ENCODE measurements at regions of chr2 and their contacts with region 1.

Region 1: DNA sequence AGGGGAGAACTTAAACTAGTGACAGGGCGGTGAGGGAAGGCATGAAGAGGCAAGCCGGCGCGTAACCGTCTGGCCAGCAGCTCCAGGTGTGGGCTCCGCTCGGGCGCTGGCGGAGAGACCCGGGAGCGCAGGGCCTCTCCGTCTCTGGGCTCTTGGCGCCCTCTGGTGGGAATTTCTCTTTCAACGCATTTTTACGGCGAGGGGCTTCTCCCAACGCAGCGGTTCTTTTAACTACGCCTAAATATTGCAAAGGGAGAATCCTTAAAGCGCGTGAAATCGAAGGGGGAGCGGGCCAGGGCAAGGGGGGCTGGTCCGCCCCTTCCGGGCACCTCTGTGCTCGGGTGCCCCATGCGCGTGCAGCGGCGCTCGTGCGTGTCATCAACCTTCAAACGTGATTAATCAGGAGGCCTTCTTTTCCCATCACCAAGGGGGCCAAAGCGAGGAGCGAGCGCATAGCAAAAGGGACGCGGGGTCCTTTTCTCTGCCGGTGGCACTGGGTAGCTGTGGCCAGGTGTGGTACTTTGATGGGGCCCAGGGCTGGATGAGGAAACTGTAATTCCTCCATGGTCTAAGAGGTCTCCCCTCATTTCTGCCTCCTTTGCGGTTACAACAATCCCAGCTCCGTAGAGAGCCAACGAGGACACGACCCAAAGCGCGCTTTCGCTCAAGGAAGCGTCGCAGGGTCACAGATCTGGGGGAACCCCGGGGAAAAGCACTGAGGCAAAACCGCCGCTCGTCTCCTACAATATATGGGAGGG is 762 bp upstream of the GAD1 start:
- DNase-seq: peak; percentile 81
- H3K4me3 ChIP-seq: peak overlapping the region; percentile 16 to 72 (median 44)
- H3K27ac ChIP-seq: no peak overlapping the region
- H3K4me1 ChIP-seq: peaks cover 45 to 78% (median 62%) of the 10 kb centered on the region in 6 donors
- H3K27me3 ChIP-seq: peaks cover 27 to 97% (median 81%) of the 10 kb centered on the region in 7 donors
- CTCF ChIP-seq: peak; percentile 39 to 75 (median 66)
- POLR2A ChIP-seq: no peak

Region 2: GRCh38 chr2:170235860-170236679 is 579.9 kb before region 1 on chr2:
- intact Hi-C with region 1: loop called (anchors 10 kb)
- DNase-seq: no peak
- H3K4me3 ChIP-seq: no peak overlapping the region
- H3K27ac ChIP-seq: no peak overlapping the region
- H3K4me1 ChIP-seq: no peaks in the 10 kb centered on the region
- H3K27me3 ChIP-seq: peaks cover 0 to 10% (median 0%) of the 10 kb centered on the region in 7 donors
- CTCF ChIP-seq: peak in 6 of 11 experiments; percentile 15 to 39 (median 26)
- POLR2A ChIP-seq: no peak

Region 3: GRCh38 chr2:170361090-170361936 is 454.6 kb before region 1 on chr2:
- intact Hi-C with region 1: loop called (anchors 10 kb)
- DNase-seq: no peak
- H3K4me3 ChIP-seq: no peak overlapping the region
- H3K27ac ChIP-seq: no peak overlapping the region
- H3K4me1 ChIP-seq: peaks cover 0 to 7% (median 2%) of the 10 kb centered on the region in 6 donors
- H3K27me3 ChIP-seq: peaks cover 0 to 44% (median 5%) of the 10 kb centered on the region in 7 donors
- CTCF ChIP-seq: peak in 10 of 11 experiments; percentile 25 to 66 (median 53)
- POLR2A ChIP-seq: no peak

Region 4: GRCh38 chr2:170409164-170409535 is 406.8 kb before region 1 on chr2:
- intact Hi-C with region 1: loop called (anchors 10 kb)
- DNase-seq: no peak
- H3K4me3 ChIP-seq: peak overlapping the region in 1 of 8 donors; percentile 33
- H3K27ac ChIP-seq: no peak overlapping the region
- H3K4me1 ChIP-seq: peaks cover 5 to 16% (median 10%) of the 10 kb centered on the region in 6 donors
- H3K27me3 ChIP-seq: peaks cover 0 to 32% (median 5%) of the 10 kb centered on the region in 7 donors
- CTCF ChIP-seq: peak in 10 of 11 experiments; percentile 50 to 85 (median 70)
- POLR2A ChIP-seq: no peak

Region 5: GRCh38 chr2:170486730-170487129 is 329.2 kb before region 1 on chr2:
- intact Hi-C with region 1: loop called (anchors 5 kb)
- DNase-seq: no peak
- H3K4me3 ChIP-seq: no peak overlapping the region
- H3K27ac ChIP-seq: no peak overlapping the region
- H3K4me1 ChIP-seq: no peaks in the 10 kb centered on the region
- H3K27me3 ChIP-seq: no peaks in the 10 kb centered on the region
- CTCF ChIP-seq: no peak
- POLR2A ChIP-seq: no peak